MCF 10A (cell line): ENCODE measurements at regions of chr19 and their contacts with region 1.

Region 1: GRCh38 chr19:36054119-36054732 is at the start of gene THAP8:
- DNase-seq: peak; percentile 99
- H3K4me3 Mint-ChIP-seq: peak within 1 kb of the TSS; percentile 86
- H3K27ac Mint-ChIP-seq: peak within 1 kb of the TSS; percentile 73
- H3K4me1 Mint-ChIP-seq: peaks cover 4% of the 10 kb centered on the region
- H3K27me3 Mint-ChIP-seq: no peaks in the 10 kb centered on the region
- CTCF ChIP-seq: peak; percentile 40
- total RNA-seq, gene THAP8: 4.0 and 4.7 TPM in 2 replicates

Region 2: GRCh38 chr19:36014029-36014924 is 39.9 kb before region 1 on chr19 and contains the start of gene ALKBH6:
- CTCF ChIA-PET with region 1: interaction called, 4 read pairs
- POLR2A ChIA-PET with region 1: interaction called, 13 read pairs
- intact Hi-C with region 1: loop called (anchors 1 kb)
- DNase-seq: peak; percentile 100
- H3K4me3 Mint-ChIP-seq: peak within 1 kb of the TSS; percentile 89
- H3K27ac Mint-ChIP-seq: peak within 1 kb of the TSS; percentile 92
- H3K4me1 Mint-ChIP-seq: peaks cover 38% of the 10 kb centered on the region
- H3K27me3 Mint-ChIP-seq: no peaks in the 10 kb centered on the region
- CTCF ChIP-seq: no peak
- total RNA-seq, gene ALKBH6: 16.5 and 20.9 TPM in 2 replicates